Calu3 (cell line): ENCODE measurements at regions of chr5 and their contacts with region 1.

Region 1: GRCh38 chr5:142446131-142446959 is 121.5 kb upstream of the SPRY4 start:
- DNase-seq: peak; percentile 20
- H3K4me3 Mint-ChIP-seq: no peak overlapping the region
- H3K27ac Mint-ChIP-seq: peak overlapping the region; percentile 51
- H3K4me1 Mint-ChIP-seq: peaks cover 21% of the 10 kb centered on the region
- H3K27me3 Mint-ChIP-seq: no peaks in the 10 kb centered on the region
- CTCF ChIP-seq: no peak

Region 2: DNA sequence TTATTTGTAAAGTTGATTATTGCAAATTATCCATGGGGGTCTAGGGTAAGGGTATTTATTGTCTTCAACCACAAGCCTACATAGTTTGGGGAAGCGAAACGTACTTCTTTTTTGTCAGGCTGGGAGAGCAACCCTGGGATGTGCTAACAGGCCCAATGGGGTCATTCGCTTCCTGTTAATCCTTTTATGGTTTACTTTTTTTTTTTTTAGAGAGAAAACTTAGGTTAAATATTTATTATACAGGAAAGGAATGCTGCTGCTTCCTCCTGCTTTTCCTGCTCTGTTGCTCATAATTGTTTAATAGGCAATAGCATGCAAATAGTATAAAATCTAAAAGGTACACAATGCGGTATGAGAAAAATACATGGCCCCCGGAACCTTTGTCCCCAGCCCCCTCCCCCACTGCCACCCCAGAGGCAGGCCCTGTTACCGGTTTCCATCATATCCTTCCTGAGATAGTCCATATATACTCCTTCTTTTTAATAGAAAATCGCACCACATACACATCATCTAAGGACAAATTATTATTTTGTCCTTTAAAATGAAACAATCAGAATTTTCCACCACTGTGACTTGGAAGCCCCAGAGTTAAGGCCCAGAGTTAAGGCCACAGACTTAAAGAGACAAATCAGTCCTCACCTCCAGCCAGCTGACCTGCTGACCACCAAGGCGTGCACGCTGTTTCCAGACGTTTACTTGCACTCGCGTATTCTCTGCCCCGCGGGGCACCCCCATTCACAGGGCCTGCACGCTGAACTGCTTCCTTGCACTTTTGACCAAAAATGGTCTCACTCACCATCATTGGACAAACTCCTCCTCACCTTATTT is 253.8 kb before region 1 on chr5:
- CTCF ChIA-PET with region 1: no interaction called
- intact Hi-C with region 1: no loop called
- DNase-seq: no peak
- H3K4me3 Mint-ChIP-seq: no peak overlapping the region
- H3K27ac Mint-ChIP-seq: no peak overlapping the region
- H3K4me1 Mint-ChIP-seq: no peaks in the 10 kb centered on the region
- H3K27me3 Mint-ChIP-seq: peaks cover 25% of the 10 kb centered on the region
- CTCF ChIP-seq: no peak

Region 3: GRCh38 chr5:142529626-142530278 is 83.4 kb after region 1 on chr5:
- CTCF ChIA-PET with region 1: no interaction called
- intact Hi-C with region 1: loop called (anchors 5 kb)
- DNase-seq: peak; percentile 48
- H3K4me3 Mint-ChIP-seq: peak overlapping the region; percentile 1
- H3K27ac Mint-ChIP-seq: peak overlapping the region; percentile 46
- H3K4me1 Mint-ChIP-seq: peaks cover 35% of the 10 kb centered on the region
- H3K27me3 Mint-ChIP-seq: no peaks in the 10 kb centered on the region
- CTCF ChIP-seq: no peak